B cell (primary cell): ENCODE measurements at regions of chr16 and their contacts with region 1.

Region 1: GRCh38 chr16:15636392-15636873 is 6.5 kb downstream of the MARF1 start:
- DNase-seq: peak; percentile 74
- ATAC-seq: peak; percentile 74
- H3K4me3 ChIP-seq: peak overlapping the region in 3 of 5 experiments; percentile 3 to 46 (median 3)
- H3K4me3 Mint-ChIP-seq: peak overlapping the region; percentile 87
- H3K27ac ChIP-seq: peak overlapping the region; percentile 83 to 100
- H3K27ac Mint-ChIP-seq: peak overlapping the region; percentile 91
- H3K4me1 ChIP-seq: peaks cover 92 to 93% of the 10 kb centered on the region in 2 donors
- H3K4me1 Mint-ChIP-seq: peaks cover 89% of the 10 kb centered on the region
- H3K27me3 ChIP-seq: no peaks in the 10 kb centered on the region
- H3K27me3 Mint-ChIP-seq: no peaks in the 10 kb centered on the region
- CTCF ChIP-seq: no peak

Region 2: GRCh38 chr16:15427648-15428239 is 208.7 kb before region 1 on chr16:
- CTCF ChIA-PET with region 1: interaction called, 24 read pairs
- POLR2A ChIA-PET with region 1: no interaction called
- intact Hi-C with region 1: no loop called
- DNase-seq: peak; percentile 61
- ATAC-seq: peak; percentile 56
- H3K4me3 ChIP-seq: no peak overlapping the region
- H3K4me3 Mint-ChIP-seq: no peak overlapping the region
- H3K27ac ChIP-seq: no peak overlapping the region
- H3K27ac Mint-ChIP-seq: no peak overlapping the region
- H3K4me1 ChIP-seq: peaks cover 0 to 3% of the 10 kb centered on the region in 2 donors
- H3K4me1 Mint-ChIP-seq: peaks cover 3% of the 10 kb centered on the region
- H3K27me3 ChIP-seq: no peaks in the 10 kb centered on the region
- H3K27me3 Mint-ChIP-seq: peaks cover 14% of the 10 kb centered on the region
- CTCF ChIP-seq: peak; percentile 63

Region 3: GRCh38 chr16:15434425-15435215 is 201.8 kb before region 1 on chr16 and contains the start of gene BMERB1:
- CTCF ChIA-PET with region 1: no interaction called
- POLR2A ChIA-PET with region 1: no interaction called
- intact Hi-C with region 1: loop called (anchors 1 kb)
- DNase-seq: peak; percentile 45
- ATAC-seq: peak; percentile 63
- H3K4me3 ChIP-seq: peak within 1 kb of the TSS in 4 of 5 experiments; percentile 31 to 61 (median 48)
- H3K4me3 Mint-ChIP-seq: peak within 1 kb of the TSS; percentile 89
- H3K27ac ChIP-seq: no peak within 1 kb of the TSS
- H3K27ac Mint-ChIP-seq: no peak within 1 kb of the TSS
- H3K4me1 ChIP-seq: peaks cover 9 to 16% of the 10 kb centered on the region in 2 donors
- H3K4me1 Mint-ChIP-seq: peaks cover 16% of the 10 kb centered on the region
- H3K27me3 ChIP-seq: peaks cover 0 to 24% (median 11%) of the 10 kb centered on the region in 4 experiments
- H3K27me3 Mint-ChIP-seq: peaks cover 14% of the 10 kb centered on the region
- CTCF ChIP-seq: no peak
- total RNA-seq, gene BMERB1: 11.2 and 13.5 TPM in 2 replicates

Region 4: GRCh38 chr16:15650019-15650697 is 13.7 kb after region 1 on chr16 and contains the start of gene NDE1:
- CTCF ChIA-PET with region 1: interaction called, 6 read pairs
- POLR2A ChIA-PET with region 1: no interaction called
- intact Hi-C with region 1: loop called (anchors 2 kb)
- DNase-seq: peak; percentile 91
- ATAC-seq: peak; percentile 96
- H3K4me3 ChIP-seq: peak within 1 kb of the TSS; percentile 76 to 97 (median 85)
- H3K4me3 Mint-ChIP-seq: peak within 1 kb of the TSS; percentile 98
- H3K27ac ChIP-seq: peak within 1 kb of the TSS; percentile 86 to 88
- H3K27ac Mint-ChIP-seq: peak within 1 kb of the TSS; percentile 93
- H3K4me1 ChIP-seq: peaks cover 21 to 36% of the 10 kb centered on the region in 2 donors
- H3K4me1 Mint-ChIP-seq: peaks cover 37% of the 10 kb centered on the region
- H3K27me3 ChIP-seq: no peaks in the 10 kb centered on the region
- H3K27me3 Mint-ChIP-seq: no peaks in the 10 kb centered on the region
- CTCF ChIP-seq: no peak
- total RNA-seq, gene NDE1: 144 and 149 TPM in 2 replicates

Region 5: DNA sequence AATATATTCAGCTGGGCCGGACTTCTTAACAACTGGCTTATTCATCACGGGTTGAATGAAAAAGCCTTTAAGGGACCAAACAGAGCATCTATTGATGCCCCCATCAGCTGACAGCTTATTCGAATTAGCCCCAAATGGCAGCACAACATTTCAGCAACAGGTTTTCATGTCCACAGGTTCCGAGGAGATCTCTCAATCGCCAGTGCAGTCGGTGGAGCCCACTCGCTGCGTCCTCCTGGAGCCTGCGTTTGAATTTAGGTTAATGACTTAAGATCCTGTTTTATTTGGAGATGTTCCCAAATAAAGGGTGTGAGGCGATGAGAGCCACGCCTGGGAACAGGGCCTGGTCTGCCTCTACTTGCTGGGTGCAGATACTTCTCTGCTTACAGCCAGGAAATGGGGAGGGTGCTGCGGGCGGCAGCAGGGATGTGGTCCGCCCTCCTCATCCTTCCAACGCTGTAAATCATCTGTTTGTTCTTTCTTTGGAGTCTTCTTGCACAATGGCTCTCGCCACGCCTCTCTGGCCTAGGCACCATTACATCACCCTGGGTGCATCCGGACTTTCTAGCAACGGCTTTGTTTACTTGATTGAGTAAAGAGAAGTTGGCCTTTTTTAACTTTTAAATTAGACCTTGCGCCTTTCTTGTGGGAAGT is 36.2 kb after region 1 on chr16:
- CTCF ChIA-PET with region 1: no interaction called
- POLR2A ChIA-PET with region 1: no interaction called
- intact Hi-C with region 1: loop called (anchors 5 kb)
- DNase-seq: peak; percentile 74
- ATAC-seq: peak; percentile 90
- H3K4me3 ChIP-seq: peak overlapping the region in 2 of 5 experiments; percentile 1 to 6
- H3K4me3 Mint-ChIP-seq: peak overlapping the region; percentile 59
- H3K27ac ChIP-seq: peak overlapping the region; percentile 87 to 95
- H3K27ac Mint-ChIP-seq: peak overlapping the region; percentile 92
- H3K4me1 ChIP-seq: peaks cover 19 to 20% of the 10 kb centered on the region in 2 donors
- H3K4me1 Mint-ChIP-seq: peaks cover 38% of the 10 kb centered on the region
- H3K27me3 ChIP-seq: no peaks in the 10 kb centered on the region
- H3K27me3 Mint-ChIP-seq: no peaks in the 10 kb centered on the region
- CTCF ChIP-seq: no peak